Activated T-helper 1 cell treated with anti-CD3 and anti-CD28 coated beads, Interleukin-12 subunit alpha, Interleukin-12 subunit beta, Interleukin-2, Interleukin-4 antibody, amounts not matched to agents 30 ng/mL and 10 ng/mL and 1 ng/mL, durations not matched to agents 14 hours and 24 hours and 36 hours (primary cell): ENCODE measurements at regions of chr1 and their contacts with region 1.

Region 1: GRCh38 chr1:243850452-243851256 is 611 bp upstream of the AKT3 start:
- DNase-seq: peak; percentile 74
- H3K4me3 Mint-ChIP-seq: peak overlapping the region; percentile 87
- H3K27ac Mint-ChIP-seq: peak overlapping the region; percentile 84
- H3K4me1 Mint-ChIP-seq: peaks cover 20% of the 10 kb centered on the region
- H3K27me3 Mint-ChIP-seq: peaks cover 37% of the 10 kb centered on the region

Region 2: DNA sequence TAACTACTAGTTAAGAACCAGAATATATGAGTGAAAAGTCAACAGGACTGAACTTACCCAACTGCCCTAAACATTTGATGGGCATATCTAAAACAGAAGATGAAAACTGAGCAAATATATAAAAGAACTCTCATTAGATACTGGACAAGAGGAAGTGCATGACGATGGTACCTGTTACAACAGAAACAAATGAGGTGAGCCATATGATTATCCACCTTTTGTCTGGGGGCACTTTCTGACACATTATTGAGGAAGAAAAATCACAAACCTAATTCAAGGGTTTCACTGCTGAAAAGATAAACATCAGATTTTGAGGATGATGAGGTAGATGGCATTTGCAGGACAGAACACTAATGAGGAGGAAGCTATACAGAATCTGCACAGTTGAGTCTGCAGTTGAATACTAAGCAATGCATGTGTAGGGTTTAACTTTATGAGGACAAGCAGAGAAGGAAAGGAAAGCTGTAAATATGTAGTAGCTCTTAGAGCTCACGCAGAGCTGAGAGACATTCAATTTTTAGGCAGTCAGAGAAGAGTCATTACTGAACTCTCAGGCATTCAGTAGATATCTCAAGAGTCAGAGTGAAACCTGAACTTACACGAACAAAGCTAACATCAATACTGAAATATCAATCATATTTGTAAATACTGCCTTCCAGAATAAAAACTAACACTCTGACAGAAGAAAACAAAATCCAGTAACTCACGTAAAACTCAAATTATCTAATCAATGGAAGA is 262.7 kb before region 1 on chr1:
- intact Hi-C with region 1: loop called (anchors 2 kb)
- DNase-seq: no peak
- H3K4me3 Mint-ChIP-seq: peak overlapping the region; percentile 3
- H3K27ac Mint-ChIP-seq: peak overlapping the region; percentile 41
- H3K4me1 Mint-ChIP-seq: peaks cover 20% of the 10 kb centered on the region
- H3K27me3 Mint-ChIP-seq: no peaks in the 10 kb centered on the region

Region 3: DNA sequence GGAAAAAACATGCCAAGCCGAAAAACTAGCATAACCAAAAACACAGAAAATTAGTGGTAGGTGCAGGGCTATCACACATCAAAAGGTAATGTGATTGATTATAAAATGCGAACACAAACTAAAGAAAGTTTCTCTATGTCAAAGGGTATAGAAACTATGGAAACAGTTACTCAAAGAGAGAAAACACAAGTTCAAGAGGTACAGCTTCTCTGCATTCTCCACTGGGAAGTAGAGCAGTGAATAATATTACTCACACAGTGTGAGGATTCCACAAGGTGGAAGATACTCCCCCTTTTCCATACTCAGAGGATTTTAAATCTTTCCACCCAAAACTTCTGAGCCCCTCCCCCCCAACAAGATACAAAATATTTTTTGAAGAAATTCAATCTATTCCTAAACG is 19.2 kb before region 1 on chr1:
- intact Hi-C with region 1: loop called (anchors 1 kb)
- DNase-seq: no peak
- H3K4me3 Mint-ChIP-seq: no peak overlapping the region
- H3K27ac Mint-ChIP-seq: peak overlapping the region; percentile 26
- H3K4me1 Mint-ChIP-seq: peaks cover 24% of the 10 kb centered on the region
- H3K27me3 Mint-ChIP-seq: no peaks in the 10 kb centered on the region

Region 4: DNA sequence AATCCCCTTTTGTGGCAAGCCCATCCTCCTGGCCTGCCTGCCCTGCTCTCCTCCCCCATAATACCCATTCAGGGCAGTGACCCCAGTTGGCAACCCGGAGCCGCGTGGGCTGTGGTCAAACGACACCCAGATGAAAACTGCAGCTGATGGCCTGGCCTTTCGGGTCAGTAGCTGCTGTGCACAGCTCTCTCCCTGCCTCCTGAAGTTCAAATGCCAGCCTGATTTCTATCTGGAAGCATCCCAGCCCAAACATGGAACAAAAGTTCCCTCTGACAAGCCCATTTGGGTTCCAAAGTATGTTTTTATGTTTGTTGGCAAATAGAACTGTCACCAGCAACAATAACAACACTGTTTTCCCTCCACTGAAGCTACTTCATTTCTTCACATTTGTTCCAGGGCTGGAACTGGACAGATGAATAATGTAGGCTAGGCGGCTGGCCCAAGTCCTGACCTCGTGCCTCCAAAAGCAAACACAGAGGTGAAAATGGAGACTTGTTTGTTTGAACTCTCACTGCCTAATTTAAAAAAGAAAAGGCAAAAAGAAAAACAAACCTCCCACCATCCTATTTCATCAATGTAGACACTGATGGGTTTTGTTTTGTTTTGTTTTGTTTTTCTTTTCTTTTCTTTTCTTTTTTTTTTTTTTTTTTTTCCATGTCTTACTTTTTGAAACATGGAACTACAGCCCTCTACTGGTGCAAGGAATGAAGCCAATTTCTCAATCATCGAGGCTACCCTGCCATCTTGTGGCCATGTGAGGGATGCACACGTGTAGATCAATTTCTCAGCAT is 422.0 kb after region 1 on chr1:
- intact Hi-C with region 1: loop called (anchors 5 kb)
- DNase-seq: peak; percentile 52
- H3K4me3 Mint-ChIP-seq: no peak overlapping the region
- H3K27ac Mint-ChIP-seq: no peak overlapping the region
- H3K4me1 Mint-ChIP-seq: peaks cover 8% of the 10 kb centered on the region
- H3K27me3 Mint-ChIP-seq: peaks cover 3% of the 10 kb centered on the region

Region 5: GRCh38 chr1:244451951-244452795 is 601.5 kb after region 1 on chr1:
- intact Hi-C with region 1: loop called (anchors 1 kb)
- DNase-seq: peak; percentile 98
- H3K4me3 Mint-ChIP-seq: peak overlapping the region; percentile 95
- H3K27ac Mint-ChIP-seq: peak overlapping the region; percentile 96
- H3K4me1 Mint-ChIP-seq: peaks cover 41% of the 10 kb centered on the region
- H3K27me3 Mint-ChIP-seq: no peaks in the 10 kb centered on the region

Region 6: GRCh38 chr1:244970661-244971551 is 1120.3 kb after region 1 on chr1:
- intact Hi-C with region 1: loop called (anchors 5 kb)
- DNase-seq: peak; percentile 82
- H3K4me3 Mint-ChIP-seq: peak overlapping the region; percentile 92
- H3K27ac Mint-ChIP-seq: peak overlapping the region; percentile 98
- H3K4me1 Mint-ChIP-seq: peaks cover 21% of the 10 kb centered on the region
- H3K27me3 Mint-ChIP-seq: peaks cover 2% of the 10 kb centered on the region